ENCODE measurements at regions of chr13 and their contacts with region 1.

Region 1: DNA sequence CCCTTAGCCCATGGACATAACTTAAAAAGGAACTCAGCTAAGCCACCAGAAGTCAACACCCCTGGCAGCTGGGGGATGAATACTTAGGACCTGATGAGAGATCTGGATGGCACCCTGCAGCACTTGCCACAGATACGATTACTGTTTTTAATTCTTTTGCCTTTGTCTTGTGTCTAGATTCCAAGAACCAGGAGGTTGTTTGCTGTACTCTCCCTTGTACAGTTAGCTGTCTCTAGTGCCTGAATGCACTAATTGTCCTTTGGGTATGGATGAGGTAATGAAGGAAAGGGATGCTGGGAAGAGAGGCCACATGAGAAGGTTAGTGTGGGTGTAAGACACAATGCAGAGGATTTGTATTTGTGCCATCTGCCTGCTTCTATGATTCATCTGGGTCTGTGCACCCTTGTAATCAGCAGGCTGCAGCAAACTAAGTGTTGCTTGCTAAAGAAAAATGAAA is 385.8 kb downstream of the KCNRG start:
- DNase-seq: no peak
- H3K4me3 ChIP-seq: no peak overlapping the region
- H3K4me3 Mint-ChIP-seq: no peak overlapping the region
- H3K27ac Mint-ChIP-seq: no peak overlapping the region
- H3K4me1 ChIP-seq: no peaks in the 10 kb centered on the region
- H3K4me1 Mint-ChIP-seq: no peaks in the 10 kb centered on the region
- H3K27me3 ChIP-seq: no peaks in the 10 kb centered on the region
- H3K27me3 Mint-ChIP-seq: no peaks in the 10 kb centered on the region
- CTCF ChIP-seq: no peak

Region 2: GRCh38 chr13:50357586-50358118 is 43.4 kb before region 1 on chr13:
- CTCF ChIA-PET with region 1: no interaction called
- POLR2A ChIA-PET with region 1: no interaction called
- intact Hi-C with region 1: no loop called
- DNase-seq: peak in 1 of 2 experiments; percentile 12
- H3K4me3 ChIP-seq: no peak overlapping the region
- H3K4me3 Mint-ChIP-seq: peak overlapping the region; percentile 19
- H3K27ac Mint-ChIP-seq: peak overlapping the region; percentile 25
- H3K4me1 ChIP-seq: no peaks in the 10 kb centered on the region
- H3K4me1 Mint-ChIP-seq: peaks cover 10% of the 10 kb centered on the region
- H3K27me3 ChIP-seq: no peaks in the 10 kb centered on the region
- H3K27me3 Mint-ChIP-seq: no peaks in the 10 kb centered on the region
- CTCF ChIP-seq: no peak

Region 3: GRCh38 chr13:50370303-50370950 is 30.6 kb before region 1 on chr13:
- CTCF ChIA-PET with region 1: no interaction called
- POLR2A ChIA-PET with region 1: no interaction called
- intact Hi-C with region 1: loop called (anchors 1 kb)
- DNase-seq: no peak
- H3K4me3 ChIP-seq: no peak overlapping the region
- H3K4me3 Mint-ChIP-seq: no peak overlapping the region
- H3K27ac Mint-ChIP-seq: no peak overlapping the region
- H3K4me1 ChIP-seq: no peaks in the 10 kb centered on the region
- H3K4me1 Mint-ChIP-seq: peaks cover 7% of the 10 kb centered on the region
- H3K27me3 ChIP-seq: no peaks in the 10 kb centered on the region
- H3K27me3 Mint-ChIP-seq: no peaks in the 10 kb centered on the region
- CTCF ChIP-seq: no peak

Measured in Caco-2 (cell line).